ENCODE measurements at regions of chr15 and their contacts with region 1.

Region 1: DNA sequence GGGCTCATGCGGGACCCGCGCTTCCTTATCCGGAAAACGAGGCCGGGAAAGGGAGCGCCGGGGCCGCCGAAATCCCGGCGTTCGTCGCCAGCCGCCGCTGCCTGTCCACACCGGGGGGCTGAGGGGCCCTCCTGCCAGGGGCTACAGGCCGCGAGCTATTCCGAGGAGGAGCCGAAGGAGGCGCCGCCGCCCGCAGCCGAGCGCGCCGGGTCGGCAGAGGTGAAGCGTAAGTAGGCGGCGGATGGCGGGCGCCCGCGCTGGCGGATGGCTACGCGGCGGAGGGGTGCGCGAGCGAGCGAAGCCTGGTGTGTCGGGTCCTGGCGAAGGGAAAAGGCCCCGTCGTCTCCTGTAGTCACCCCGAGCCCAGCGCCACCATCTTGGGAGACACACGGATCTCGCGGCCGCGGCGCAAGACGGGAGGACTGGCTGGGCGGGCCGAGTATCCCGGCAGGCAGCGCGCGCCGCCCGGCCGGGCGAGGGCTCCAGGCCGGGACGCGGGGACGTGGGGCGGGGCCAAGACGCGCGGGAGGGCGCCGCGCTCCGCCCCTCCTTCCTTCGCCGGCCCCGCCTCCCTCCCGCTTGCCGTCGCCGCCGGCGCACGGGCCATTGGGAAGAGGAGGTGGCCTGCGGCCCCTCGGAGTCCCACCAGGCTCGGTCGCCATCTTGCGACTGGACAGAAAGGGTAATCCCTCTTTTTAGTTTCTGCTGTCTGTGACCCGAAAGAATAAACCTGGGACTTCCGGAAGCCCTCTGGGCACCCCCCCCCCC is at the start of gene UBE3A:
- DNase-seq: peak; percentile 69 to 97 (median 88)
- H3K4me3 ChIP-seq: peak within 1 kb of the TSS; percentile 67 to 100 (median 95)
- H3K27ac ChIP-seq: peak within 1 kb of the TSS; percentile 73 to 99 (median 96)
- H3K27me3 ChIP-seq: no peaks in the 10 kb centered on the region
- CTCF ChIP-seq: peak in 55 of 56 donors; percentile 31 to 74 (median 57)
- total RNA-seq, gene UBE3A: 80.0 to 135 (median 112) TPM

Region 2: DNA sequence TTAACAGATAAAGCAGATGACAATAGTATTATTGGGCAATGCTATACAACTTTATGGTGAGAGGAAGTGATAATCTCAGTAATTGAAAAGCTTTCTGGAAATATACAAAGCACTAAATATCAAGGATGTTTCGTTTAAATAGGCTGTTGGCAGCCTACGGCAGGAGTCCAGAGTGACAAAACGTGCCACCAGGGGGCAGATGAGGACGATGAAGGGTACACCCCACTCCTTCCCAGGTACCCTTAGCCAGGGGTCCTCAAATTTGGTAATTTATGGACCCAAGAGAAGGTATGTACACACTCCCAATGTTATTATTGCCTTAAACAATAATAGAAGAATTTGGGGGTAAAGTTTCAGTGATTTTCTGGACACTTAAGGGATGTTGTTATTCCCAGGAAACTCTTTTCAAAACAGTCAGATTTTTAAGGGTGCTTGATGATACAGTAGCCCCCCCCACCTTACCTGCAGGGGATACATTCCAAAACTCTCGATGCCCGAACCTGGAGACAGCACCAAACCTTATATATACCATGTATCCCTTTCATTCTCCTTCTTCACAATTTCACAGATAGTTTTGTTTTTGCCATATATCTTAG is 1789.8 kb before region 1 on chr15:
- intact Hi-C with region 1: loop called in 1 of 2 experiments (anchors 10 kb)
- DNase-seq: peak in 6 of 10 donors; percentile 35 to 59 (median 51)
- H3K4me3 ChIP-seq: peak overlapping the region in 17 of 59 donors; percentile 9 to 70 (median 57)
- H3K27ac ChIP-seq: no peak overlapping the region
- H3K27me3 ChIP-seq: peaks cover 0 to 17% (median 0%) of the 10 kb centered on the region in 45 donors
- CTCF ChIP-seq: peak; percentile 35 to 81 (median 68)

Region 3: GRCh38 chr15:24772686-24773373 is 666.0 kb before region 1 on chr15:
- intact Hi-C with region 1: loop called in 1 of 2 experiments (anchors 5 kb)
- DNase-seq: peak; percentile 50 to 83 (median 75)
- H3K4me3 ChIP-seq: peak overlapping the region; percentile 21 to 73 (median 54)
- H3K27ac ChIP-seq: peak overlapping the region in 37 of 59 donors; percentile 11 to 83 (median 54)
- H3K27me3 ChIP-seq: peaks cover 0 to 51% (median 2%) of the 10 kb centered on the region in 45 donors
- CTCF ChIP-seq: peak in 4 of 56 donors; percentile 13 to 17 (median 16)

Region 4: GRCh38 chr15:25333049-25333448 is 105.7 kb before region 1 on chr15:
- intact Hi-C with region 1: loop called in 1 of 2 experiments (anchors 10 kb)
- DNase-seq: no peak
- H3K4me3 ChIP-seq: no peak overlapping the region
- H3K27ac ChIP-seq: no peak overlapping the region
- H3K27me3 ChIP-seq: no peaks in the 10 kb centered on the region
- CTCF ChIP-seq: no peak

Region 5: DNA sequence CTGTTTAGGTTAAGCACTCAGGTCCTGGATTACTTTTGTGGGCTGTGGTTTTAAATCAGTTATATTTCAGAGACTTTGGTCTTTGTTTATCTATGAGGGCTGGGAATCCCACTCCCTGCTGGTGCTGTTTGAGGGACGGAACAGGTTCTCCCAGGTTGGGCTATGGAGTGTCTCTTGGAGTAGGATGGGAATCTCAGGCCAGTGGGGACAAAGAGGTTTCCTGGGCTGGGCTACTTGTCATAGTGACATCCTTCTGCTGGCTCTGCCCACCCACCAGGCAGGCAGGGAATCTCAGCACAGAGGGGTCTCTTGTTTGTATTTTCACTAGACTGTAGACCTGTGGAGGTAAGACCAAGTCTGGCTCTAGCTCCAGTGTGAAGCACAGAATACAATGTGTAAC is 47.3 kb after region 1 on chr15:
- intact Hi-C with region 1: no loop called
- DNase-seq: no peak
- H3K4me3 ChIP-seq: no peak overlapping the region
- H3K27ac ChIP-seq: no peak overlapping the region
- H3K27me3 ChIP-seq: no peaks in the 10 kb centered on the region
- CTCF ChIP-seq: no peak